CD4-positive, alpha-beta T cell (primary cell): ENCODE measurements at regions of chr6 and their contacts with region 1.

Region 1: GRCh38 chr6:15312500-15312899 is 66.6 kb downstream of the JARID2 start:
- DNase-seq: peak in 1 of 14 experiments; percentile 23
- ATAC-seq: peak; percentile 64
- H3K4me3 ChIP-seq: no peak overlapping the region
- H3K4me3 Mint-ChIP-seq: peak overlapping the region; percentile 12
- H3K27ac ChIP-seq: no peak overlapping the region
- H3K27ac Mint-ChIP-seq: peak overlapping the region; percentile 22
- H3K4me1 ChIP-seq: peaks cover 50% of the 10 kb centered on the region
- H3K4me1 Mint-ChIP-seq: peaks cover 93% of the 10 kb centered on the region
- H3K27me3 ChIP-seq: no peaks in the 10 kb centered on the region
- H3K27me3 Mint-ChIP-seq: no peaks in the 10 kb centered on the region
- CTCF ChIP-seq: no peak

Region 2: DNA sequence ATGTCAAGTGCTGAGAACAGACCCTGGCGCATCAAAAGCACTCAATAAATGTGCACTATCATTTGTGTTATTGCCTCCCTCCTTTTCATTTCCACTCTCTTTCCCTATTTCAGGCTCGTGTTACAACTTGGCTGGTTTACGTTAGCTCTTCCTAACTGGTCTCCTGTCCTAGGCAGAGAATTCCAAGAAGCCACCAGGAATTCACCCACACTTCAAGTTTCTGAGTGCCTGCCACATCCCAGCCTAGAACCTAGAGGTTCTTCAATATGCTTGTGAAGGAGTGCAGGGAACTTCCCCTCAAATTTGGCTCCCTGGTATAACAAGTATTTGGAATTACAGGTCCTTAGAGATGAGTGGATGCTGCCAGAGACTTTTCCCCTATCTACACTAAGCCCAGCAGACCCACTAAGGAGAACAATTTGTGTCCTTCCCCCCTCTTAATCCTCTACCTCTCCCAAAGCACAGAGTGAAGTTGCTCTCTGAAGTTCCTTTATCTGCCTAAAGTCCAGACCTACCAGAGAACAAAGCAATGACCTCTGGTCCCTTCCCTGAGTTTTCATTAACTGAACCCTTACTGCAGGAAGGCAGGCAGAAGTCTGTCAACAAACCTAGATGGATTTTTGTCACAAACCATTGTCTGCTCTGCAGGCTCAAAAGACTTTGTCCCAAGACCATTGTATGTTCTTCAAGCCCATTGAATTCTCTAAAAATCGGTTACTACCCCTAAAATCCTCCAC is 268.2 kb before region 1 on chr6:
- CTCF ChIA-PET with region 1: no interaction called
- POLR2A ChIA-PET with region 1: no interaction called
- intact Hi-C with region 1: no loop called
- DNase-seq: no peak
- ATAC-seq: no peak
- H3K4me3 ChIP-seq: no peak overlapping the region
- H3K4me3 Mint-ChIP-seq: no peak overlapping the region
- H3K27ac ChIP-seq: no peak overlapping the region
- H3K27ac Mint-ChIP-seq: no peak overlapping the region
- H3K4me1 ChIP-seq: no peaks in the 10 kb centered on the region
- H3K4me1 Mint-ChIP-seq: no peaks in the 10 kb centered on the region
- H3K27me3 ChIP-seq: no peaks in the 10 kb centered on the region
- H3K27me3 Mint-ChIP-seq: no peaks in the 10 kb centered on the region
- CTCF ChIP-seq: no peak

Region 3: GRCh38 chr6:15299430-15300131 is 12.9 kb before region 1 on chr6:
- CTCF ChIA-PET with region 1: no interaction called
- POLR2A ChIA-PET with region 1: no interaction called
- intact Hi-C with region 1: loop called in 1 of 2 experiments (anchors 2 kb)
- DNase-seq: peak in 6 of 14 experiments; percentile 18 to 64 (median 44)
- ATAC-seq: peak; percentile 45
- H3K4me3 ChIP-seq: no peak overlapping the region
- H3K4me3 Mint-ChIP-seq: peak overlapping the region; percentile 11
- H3K27ac ChIP-seq: no peak overlapping the region
- H3K27ac Mint-ChIP-seq: peak overlapping the region; percentile 53
- H3K4me1 ChIP-seq: peaks cover 42% of the 10 kb centered on the region
- H3K4me1 Mint-ChIP-seq: peaks cover 75% of the 10 kb centered on the region
- H3K27me3 ChIP-seq: no peaks in the 10 kb centered on the region
- H3K27me3 Mint-ChIP-seq: no peaks in the 10 kb centered on the region
- CTCF ChIP-seq: no peak

Region 4: GRCh38 chr6:15326067-15326614 is 13.6 kb after region 1 on chr6:
- CTCF ChIA-PET with region 1: no interaction called
- POLR2A ChIA-PET with region 1: no interaction called
- intact Hi-C with region 1: no loop called
- DNase-seq: peak in 2 of 14 experiments; percentile 33 to 43
- ATAC-seq: peak; percentile 51
- H3K4me3 ChIP-seq: no peak overlapping the region
- H3K4me3 Mint-ChIP-seq: no peak overlapping the region
- H3K27ac ChIP-seq: no peak overlapping the region
- H3K27ac Mint-ChIP-seq: no peak overlapping the region
- H3K4me1 ChIP-seq: peaks cover 35% of the 10 kb centered on the region
- H3K4me1 Mint-ChIP-seq: peaks cover 88% of the 10 kb centered on the region
- H3K27me3 ChIP-seq: no peaks in the 10 kb centered on the region
- H3K27me3 Mint-ChIP-seq: no peaks in the 10 kb centered on the region
- CTCF ChIP-seq: no peak

Region 5: GRCh38 chr6:15441215-15441868 is 128.8 kb after region 1 on chr6:
- CTCF ChIA-PET with region 1: no interaction called
- POLR2A ChIA-PET with region 1: no interaction called
- intact Hi-C with region 1: no loop called
- DNase-seq: peak in 11 of 14 experiments; percentile 7 to 73 (median 16)
- ATAC-seq: peak; percentile 69
- H3K4me3 ChIP-seq: no peak overlapping the region
- H3K4me3 Mint-ChIP-seq: no peak overlapping the region
- H3K27ac ChIP-seq: no peak overlapping the region
- H3K27ac Mint-ChIP-seq: no peak overlapping the region
- H3K4me1 ChIP-seq: peaks cover 21% of the 10 kb centered on the region
- H3K4me1 Mint-ChIP-seq: peaks cover 89% of the 10 kb centered on the region
- H3K27me3 ChIP-seq: no peaks in the 10 kb centered on the region
- H3K27me3 Mint-ChIP-seq: no peaks in the 10 kb centered on the region
- CTCF ChIP-seq: peak; percentile 86